Panc1 (cell line): ENCODE measurements at regions of chrX and their contacts with region 1.

Region 1: GRCh38 chrX:70454441-70455365 is 10.1 kb downstream of the DLG3 start:
- DNase-seq: peak; percentile 42
- ATAC-seq: peak; percentile 75
- H3K4me3 ChIP-seq: peak overlapping the region; percentile 38 to 60
- H3K27ac ChIP-seq: no peak overlapping the region
- H3K4me1 ChIP-seq: peaks cover 5% of the 10 kb centered on the region
- H3K27me3 ChIP-seq: no peaks in the 10 kb centered on the region
- CTCF ChIP-seq: peak; percentile 94

Region 2: DNA sequence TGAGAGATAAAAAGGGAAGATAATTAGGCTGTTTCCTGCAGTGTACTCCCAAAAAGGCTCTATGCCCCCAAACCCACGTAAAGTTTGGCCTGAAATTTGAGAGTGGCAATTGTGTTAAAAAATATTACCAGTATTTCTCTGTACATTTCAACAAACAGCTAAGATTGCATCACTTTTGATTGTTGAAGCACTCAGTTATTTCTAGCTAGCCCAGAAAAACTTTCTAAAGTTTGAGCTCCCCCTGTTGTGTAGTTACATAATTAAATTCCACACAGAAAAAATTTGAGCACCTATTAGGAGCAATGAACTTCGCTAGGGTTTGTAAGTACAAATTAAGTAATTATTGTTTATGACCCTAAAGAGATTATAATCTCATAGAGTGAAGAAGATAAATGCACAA is 99.4 kb after region 1 on chrX:
- CTCF ChIA-PET with region 1: interaction called, 6 read pairs
- POLR2A ChIA-PET with region 1: no interaction called
- in situ Hi-C with region 1: no loop called
- intact Hi-C with region 1: loop called (anchors 10 kb)
- DNase-seq: no peak
- ATAC-seq: no peak
- H3K4me3 ChIP-seq: no peak overlapping the region
- H3K27ac ChIP-seq: no peak overlapping the region
- H3K4me1 ChIP-seq: no peaks in the 10 kb centered on the region
- H3K27me3 ChIP-seq: no peaks in the 10 kb centered on the region; the same call in 1 of the 2 replicates
- CTCF ChIP-seq: peak; percentile 16; the same call in 1 of the 2 replicates

Region 3: DNA sequence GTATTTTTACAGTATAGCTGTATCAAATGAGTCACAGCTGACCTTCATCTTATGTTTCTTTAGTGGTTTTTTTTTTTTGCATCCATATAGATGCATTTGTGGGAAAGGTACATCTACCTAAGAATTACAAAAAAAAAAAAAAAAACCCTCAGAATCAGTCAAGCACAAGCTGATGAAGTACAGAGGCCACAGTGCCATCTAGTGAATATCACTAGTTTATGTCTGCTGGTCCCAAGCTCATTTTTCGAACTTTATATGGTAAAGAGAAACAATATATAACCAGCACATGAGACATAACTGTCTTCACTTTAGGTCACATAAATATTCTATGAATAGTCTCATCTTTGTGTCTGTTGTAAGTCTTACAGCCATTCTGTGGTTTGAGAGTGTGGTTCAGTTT is 210.0 kb after region 1 on chrX:
- CTCF ChIA-PET with region 1: interaction called, 3 read pairs
- POLR2A ChIA-PET with region 1: no interaction called
- in situ Hi-C with region 1: no loop called
- intact Hi-C with region 1: loop called (anchors 5 kb)
- DNase-seq: no peak
- ATAC-seq: no peak
- H3K4me3 ChIP-seq: no peak overlapping the region
- H3K27ac ChIP-seq: no peak overlapping the region
- H3K4me1 ChIP-seq: no peaks in the 10 kb centered on the region
- H3K27me3 ChIP-seq: peaks cover 7% of the 10 kb centered on the region
- CTCF ChIP-seq: peak; percentile 49; the same call in 1 of the 2 replicates